Posterior vena cava (tissue), 2 donors: ENCODE measurements at regions of chr1 and their contacts with region 1.

Region 1: GRCh38 chr1:187244623-187245022 is 415.9 kb downstream of the PLA2G4A start:
- DNase-seq: no peak

Region 2: DNA sequence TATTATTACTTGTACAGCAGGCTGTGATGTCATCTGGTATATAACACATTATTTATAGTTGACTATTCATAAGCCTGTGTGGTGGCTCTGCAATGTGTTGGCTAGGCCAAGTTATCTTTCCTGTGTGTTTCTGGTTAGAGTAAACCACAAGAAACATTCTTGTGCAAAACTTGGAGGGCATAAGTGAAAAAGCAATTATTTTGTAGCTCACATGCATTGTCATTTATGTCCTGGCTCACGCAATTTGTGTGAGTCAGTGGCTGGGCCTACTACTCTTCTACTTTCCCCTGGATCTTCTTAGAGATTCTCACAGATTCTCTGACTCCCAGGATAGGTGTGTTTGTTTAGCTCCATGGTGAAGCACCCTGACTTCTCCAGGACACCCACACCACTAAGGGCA is 623.7 kb before region 1 on chr1:
- intact Hi-C with region 1: loop called in 1 of 2 experiments (anchors 5 kb)
- DNase-seq: no peak

Region 3: GRCh38 chr1:187336441-187337168 is 92.0 kb after region 1 on chr1:
- intact Hi-C with region 1: no loop called
- DNase-seq: no peak